ENCODE measurements at regions of chr1 and their contacts with region 1.

Region 1: DNA sequence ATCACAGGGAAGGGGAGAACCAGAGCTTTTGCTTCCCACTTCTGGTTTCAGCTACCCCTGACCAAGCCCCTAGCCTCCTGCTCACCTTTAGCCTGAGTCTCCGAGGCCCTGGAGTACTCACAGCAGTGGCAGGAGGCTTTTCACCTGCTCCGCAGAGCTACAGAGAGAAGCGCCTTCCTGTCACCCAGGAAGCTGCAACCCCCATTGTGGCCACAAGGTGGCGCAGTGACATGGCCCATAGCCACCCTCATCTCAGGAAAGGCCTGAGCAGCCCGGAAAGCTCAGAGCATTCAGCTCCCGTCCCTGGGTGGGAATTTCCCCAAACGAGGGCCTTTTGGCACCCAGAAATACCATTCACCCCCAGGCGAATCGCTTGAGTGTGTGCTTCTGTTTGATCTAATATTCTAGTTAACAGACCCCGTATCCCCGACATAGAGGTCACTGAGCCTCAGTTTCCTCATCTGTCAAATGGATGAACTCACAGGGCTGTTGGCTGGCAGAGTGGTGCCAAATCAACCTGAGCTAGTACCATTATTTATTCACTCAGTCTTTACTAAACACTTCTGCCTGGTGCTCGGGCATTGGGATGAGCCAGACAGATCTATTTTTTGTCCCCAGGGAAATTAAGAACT is 25.3 kb downstream of the A3GALT2 start:
- DNase-seq: peak; percentile 86 to 89 (median 87)
- ATAC-seq: peak; percentile 86 to 90 (median 86)
- H3K4me3 ChIP-seq: no peak overlapping the region
- H3K27ac ChIP-seq: peak overlapping the region in 2 of 3 donors; percentile 12 to 69
- H3K4me1 ChIP-seq: peaks cover 0 to 37% (median 8%) of the 10 kb centered on the region in 4 donors
- H3K27me3 ChIP-seq: no peaks in the 10 kb centered on the region
- CTCF ChIP-seq: peak; percentile 92 to 98 (median 96)
- POLR2A ChIP-seq: no peak

Region 2: DNA sequence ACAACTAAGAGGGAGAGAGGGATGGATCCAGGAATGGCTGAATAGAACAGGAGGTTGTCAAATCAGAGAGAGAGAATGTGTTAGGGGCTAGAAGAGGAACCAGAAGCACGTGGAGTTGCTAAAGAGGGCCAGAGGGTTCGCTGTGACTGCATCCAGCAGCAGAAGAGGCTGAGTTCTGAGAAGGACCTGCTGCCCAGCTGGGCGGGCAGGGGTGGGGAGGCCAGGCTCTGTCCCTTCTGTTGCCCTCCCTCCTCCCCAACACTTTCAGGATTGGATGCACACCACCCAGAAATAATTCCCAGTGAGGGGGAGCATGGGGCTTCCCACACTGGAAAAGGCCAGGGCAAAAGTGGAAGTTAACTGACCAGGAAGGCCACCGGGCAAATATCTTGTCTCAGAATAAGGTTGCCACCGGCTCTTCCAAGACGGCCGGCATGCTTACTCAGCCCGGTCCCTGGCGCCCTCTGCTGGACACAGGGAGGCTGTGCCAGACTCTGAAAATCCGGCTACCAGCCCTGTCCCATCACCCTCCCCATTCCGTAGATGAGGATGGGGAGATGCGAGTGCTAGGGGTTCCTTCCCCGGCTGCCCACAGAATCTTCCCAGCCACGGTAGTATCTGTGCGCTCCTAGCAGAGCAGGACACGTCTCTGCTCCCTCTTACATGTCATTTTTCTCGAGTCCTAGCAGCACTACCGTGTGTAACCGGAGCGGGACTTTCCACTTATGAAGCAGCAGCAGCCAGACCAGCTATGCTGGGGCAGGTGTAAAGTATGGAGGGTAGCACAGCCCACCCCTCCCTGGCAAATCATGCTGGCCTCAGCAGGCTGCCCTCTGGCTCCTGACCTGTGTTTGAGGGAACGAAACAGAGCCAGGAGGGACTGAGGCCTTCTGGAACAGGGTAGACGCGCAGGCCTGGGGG is 72.2 kb after region 1 on chr1:
- intact Hi-C with region 1: loop called (anchors 5 kb)
- DNase-seq: peak; percentile 88 to 89 (median 89)
- ATAC-seq: peak; percentile 88 to 96 (median 90)
- H3K4me3 ChIP-seq: no peak overlapping the region
- H3K27ac ChIP-seq: no peak overlapping the region
- H3K4me1 ChIP-seq: peaks cover 0 to 4% (median 0%) of the 10 kb centered on the region in 4 donors
- H3K27me3 ChIP-seq: no peaks in the 10 kb centered on the region
- CTCF ChIP-seq: peak; percentile 96 to 99 (median 98)
- POLR2A ChIP-seq: no peak

Region 3: DNA sequence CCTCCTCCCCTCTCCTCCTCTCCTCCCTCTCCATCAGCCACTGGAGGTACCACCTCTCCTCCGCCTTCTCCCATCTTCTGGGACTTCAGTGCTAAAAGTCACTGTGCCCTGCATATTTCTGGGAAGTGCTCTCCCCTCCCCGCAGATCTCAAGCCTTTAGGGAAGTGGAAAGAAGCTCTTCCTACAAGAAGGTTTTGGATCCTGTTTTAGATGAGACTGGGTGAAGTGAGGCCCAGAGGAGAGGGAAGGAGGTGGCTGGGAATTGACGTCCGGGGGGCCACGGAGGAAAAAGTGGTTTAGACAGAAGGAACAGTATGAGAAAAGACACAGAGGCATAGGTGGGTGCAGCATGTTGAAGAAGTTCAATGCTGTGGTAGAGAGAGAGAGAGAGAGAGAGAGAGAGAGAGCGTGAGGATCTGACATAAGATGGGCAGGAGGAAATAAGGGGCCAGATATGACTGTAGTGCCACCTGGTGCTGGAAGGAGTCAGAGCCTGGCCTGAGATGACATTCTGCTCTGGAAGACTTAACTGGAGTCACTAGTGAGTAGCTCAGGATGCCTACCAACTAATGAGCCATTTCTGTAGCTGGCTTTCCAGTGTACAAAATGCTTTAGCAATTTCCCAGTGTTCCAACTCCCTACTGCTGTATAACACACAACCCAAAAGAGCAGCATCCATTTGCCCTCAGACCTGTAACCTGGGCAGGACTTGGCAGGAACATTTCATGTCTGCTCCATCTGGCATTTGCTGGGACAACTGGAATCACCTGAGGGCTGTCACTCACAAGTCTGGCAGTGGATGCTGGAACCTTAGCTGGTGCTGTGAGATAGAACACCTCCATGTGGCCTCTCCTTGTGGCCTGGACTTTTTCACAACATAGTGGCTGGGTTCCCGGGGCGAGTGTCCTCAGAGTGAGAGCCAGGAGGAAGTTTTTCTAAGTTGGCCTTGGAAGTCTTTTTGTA is 160.3 kb after region 1 on chr1:
- intact Hi-C with region 1: loop called (anchors 10 kb)
- DNase-seq: no peak
- ATAC-seq: peak; percentile 81 to 94 (median 90)
- H3K4me3 ChIP-seq: no peak overlapping the region
- H3K27ac ChIP-seq: no peak overlapping the region
- H3K4me1 ChIP-seq: no peaks in the 10 kb centered on the region
- H3K27me3 ChIP-seq: no peaks in the 10 kb centered on the region
- CTCF ChIP-seq: peak; percentile 41 to 60 (median 52)
- POLR2A ChIP-seq: no peak

Region 4: DNA sequence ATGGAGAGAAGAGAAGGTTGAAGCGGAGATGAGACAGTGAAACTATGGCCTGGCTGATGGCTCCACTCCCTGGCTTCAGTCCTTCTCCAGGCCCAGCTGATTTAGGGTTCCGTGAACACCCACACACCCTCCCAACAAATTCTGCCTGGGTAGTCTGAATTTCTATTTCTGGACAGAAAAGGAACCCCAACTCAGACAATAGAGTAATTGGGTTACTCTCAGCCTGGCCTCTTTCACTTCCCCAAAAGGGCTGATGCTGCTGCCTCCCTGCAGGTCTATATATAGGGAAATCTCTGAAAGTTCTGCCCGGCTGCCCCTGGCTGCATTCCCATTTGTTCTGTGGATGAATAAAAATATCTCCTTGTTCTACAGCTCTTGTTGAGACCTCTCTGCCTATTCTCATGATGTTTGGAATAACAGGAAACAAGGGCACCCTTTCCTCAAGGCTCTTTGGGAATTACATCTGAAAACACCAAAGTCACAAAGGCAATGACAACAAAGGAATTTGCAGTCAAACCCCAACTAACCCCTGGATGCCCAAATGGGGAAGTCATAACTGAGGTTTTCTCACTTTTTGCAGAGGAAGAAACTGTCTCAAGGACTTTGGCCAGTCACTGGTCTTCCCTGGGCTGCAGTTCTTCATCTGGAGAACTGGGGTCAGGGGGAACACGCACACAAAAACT is 165.5 kb after region 1 on chr1:
- intact Hi-C with region 1: loop called (anchors 10 kb)
- DNase-seq: no peak
- ATAC-seq: peak; percentile 46 to 73 (median 60)
- H3K4me3 ChIP-seq: no peak overlapping the region
- H3K27ac ChIP-seq: no peak overlapping the region
- H3K4me1 ChIP-seq: no peaks in the 10 kb centered on the region
- H3K27me3 ChIP-seq: no peaks in the 10 kb centered on the region
- CTCF ChIP-seq: no peak
- POLR2A ChIP-seq: no peak

Region 5: DNA sequence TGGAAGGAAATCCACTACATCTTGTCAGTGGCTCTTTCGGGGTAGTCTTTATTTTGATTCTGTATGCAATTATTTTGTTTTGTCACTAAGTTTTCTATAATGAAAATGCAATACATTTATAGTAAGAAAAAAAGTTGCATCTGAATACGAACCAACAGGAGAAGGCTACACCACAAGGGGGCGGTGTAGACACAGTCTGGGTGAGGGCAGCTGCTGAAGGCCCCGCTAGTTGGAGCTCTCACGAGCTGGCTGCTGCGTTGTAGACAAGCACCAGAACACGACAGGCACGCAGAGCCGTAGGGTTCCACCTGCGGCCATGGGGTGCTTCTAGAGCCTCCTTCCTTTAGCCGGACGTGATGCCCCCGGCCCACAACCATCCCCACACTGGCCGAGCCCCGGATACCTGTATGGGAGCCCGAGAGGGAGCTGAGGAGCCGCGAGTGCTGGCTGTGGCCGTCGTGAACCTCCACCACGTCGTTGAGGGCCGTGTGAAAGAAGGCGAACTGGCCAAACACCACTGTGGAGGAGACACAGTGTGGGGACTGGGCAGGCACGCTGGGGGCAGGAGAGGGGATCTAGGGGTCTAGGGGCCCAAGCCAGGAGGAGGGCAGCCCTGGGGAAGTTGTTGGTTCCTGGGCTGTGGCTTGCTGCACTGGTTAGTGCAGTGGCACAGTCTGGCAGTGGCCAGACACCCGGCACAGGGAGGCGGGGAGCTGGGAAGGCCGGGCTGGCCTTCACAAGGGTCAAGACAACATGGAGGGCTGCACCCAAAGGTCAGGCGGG is 337.6 kb after region 1 on chr1:
- intact Hi-C with region 1: no loop called
- DNase-seq: peak; percentile 87 to 89 (median 89)
- ATAC-seq: peak; percentile 95 to 99 (median 97)
- H3K4me3 ChIP-seq: no peak overlapping the region
- H3K27ac ChIP-seq: no peak overlapping the region
- H3K4me1 ChIP-seq: no peaks in the 10 kb centered on the region
- H3K27me3 ChIP-seq: no peaks in the 10 kb centered on the region
- CTCF ChIP-seq: peak; percentile 68 to 100 (median 98)
- POLR2A ChIP-seq: no peak